MCF 10A (cell line): ENCODE measurements at regions of chr5 and their contacts with region 1.

Region 1: DNA sequence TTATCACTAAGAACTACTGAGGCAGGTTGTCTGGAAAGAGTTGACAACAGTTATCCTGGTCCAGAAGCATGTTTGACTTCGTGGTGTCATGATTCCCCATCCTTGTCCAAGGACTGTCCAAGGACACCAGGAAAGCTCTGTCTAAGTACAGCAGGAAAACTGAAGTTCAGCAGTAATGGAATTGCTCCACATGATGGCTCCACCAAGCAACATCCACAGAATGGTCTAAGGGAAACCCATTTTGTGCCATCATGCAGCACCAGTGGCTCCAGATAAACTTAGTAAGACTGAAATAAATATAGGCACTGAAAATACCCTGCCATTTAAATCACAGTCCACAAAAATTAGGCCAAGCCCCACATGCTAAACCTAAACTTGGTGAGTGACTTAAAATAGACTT is 192.8 kb downstream of the CDH18 start:
- DNase-seq: peak; percentile 32
- H3K4me3 Mint-ChIP-seq: no peak overlapping the region
- H3K27ac Mint-ChIP-seq: no peak overlapping the region
- H3K4me1 Mint-ChIP-seq: no peaks in the 10 kb centered on the region
- H3K27me3 Mint-ChIP-seq: no peaks in the 10 kb centered on the region
- CTCF ChIP-seq: peak; percentile 39

Region 2: DNA sequence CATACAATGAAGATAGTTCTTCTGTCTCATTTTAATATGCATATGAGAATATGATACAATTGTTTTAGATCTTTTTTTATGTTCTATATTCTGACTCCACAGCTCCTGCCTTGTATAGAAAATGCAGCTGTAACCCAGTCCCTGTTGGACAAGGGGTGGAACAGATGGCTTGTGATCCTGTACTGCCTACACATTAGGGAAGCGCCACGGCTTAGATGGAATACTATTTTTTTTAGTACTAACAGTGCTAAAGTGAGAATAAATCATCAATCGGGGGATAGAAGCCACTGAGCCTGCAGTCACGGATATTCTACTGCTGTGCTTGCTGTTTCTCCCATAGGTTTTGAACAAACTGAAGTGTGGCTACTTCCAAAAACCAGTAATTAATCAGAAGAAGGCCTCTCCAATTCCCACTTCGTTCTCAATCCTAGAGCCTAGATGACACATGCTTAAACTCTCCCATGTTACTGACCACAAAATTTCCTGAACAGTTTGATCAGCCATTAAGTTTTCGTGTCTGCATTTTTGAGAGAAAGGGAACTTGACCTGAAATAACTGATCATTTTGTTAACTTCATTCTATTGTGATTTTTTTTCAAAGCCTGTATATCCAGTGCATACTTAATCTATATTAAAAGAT is 42.4 kb after region 1 on chr5:
- CTCF ChIA-PET with region 1: no interaction called
- POLR2A ChIA-PET with region 1: no interaction called
- intact Hi-C with region 1: no loop called
- DNase-seq: no peak
- H3K4me3 Mint-ChIP-seq: no peak overlapping the region
- H3K27ac Mint-ChIP-seq: no peak overlapping the region
- H3K4me1 Mint-ChIP-seq: no peaks in the 10 kb centered on the region
- H3K27me3 Mint-ChIP-seq: no peaks in the 10 kb centered on the region
- CTCF ChIP-seq: no peak

Region 3: DNA sequence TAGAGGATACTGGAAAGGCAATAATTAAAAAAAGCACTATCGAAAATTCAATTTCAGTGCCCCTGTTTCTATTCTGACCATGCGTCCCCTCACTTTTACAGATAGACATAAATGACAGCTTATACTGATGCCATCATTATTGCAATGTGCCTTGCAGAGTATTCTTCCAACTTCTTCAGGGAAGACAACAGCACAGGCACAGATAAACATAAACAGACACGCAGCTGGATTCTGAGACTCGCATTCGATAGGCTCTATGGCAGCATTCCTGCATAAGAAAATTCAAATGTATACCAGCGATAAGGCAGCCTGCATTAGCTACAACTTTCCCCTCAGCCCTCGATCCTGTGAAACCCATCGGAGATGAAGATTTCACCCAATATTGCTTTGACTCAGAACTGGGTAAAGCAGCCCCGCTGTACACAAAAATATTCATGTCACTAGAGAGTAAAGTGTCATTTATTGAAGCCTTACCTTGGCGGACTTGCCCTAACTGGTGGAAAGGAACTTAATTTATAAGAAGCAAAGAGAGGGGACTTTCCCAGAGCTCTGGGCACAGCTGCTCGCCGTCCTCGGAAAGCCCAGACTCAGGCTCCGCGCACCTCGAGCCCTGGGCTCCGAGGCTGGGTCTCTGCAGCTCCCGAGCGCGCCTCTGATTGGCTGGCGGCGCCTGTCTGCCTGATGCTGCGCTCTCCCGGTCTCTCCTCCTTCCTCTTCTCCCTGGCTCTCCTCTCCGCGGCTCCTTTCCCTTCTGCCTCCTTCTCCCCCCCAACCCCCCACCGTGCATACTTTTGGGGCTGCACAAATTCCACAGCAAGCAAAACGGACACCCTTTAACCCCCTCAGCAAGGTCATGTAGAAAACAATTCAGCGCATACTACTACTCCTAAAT is 192.6 kb after region 1 on chr5 and contains the start of gene CDH18:
- CTCF ChIA-PET with region 1: no interaction called
- POLR2A ChIA-PET with region 1: no interaction called
- intact Hi-C with region 1: loop called (anchors 10 kb)
- DNase-seq: peak; percentile 62
- H3K4me3 Mint-ChIP-seq: peak within 1 kb of the TSS; percentile 73
- H3K27ac Mint-ChIP-seq: no peak within 1 kb of the TSS
- H3K4me1 Mint-ChIP-seq: peaks cover 10% of the 10 kb centered on the region
- H3K27me3 Mint-ChIP-seq: no peaks in the 10 kb centered on the region
- CTCF ChIP-seq: no peak
- total RNA-seq, gene CDH18: not detected in 2 replicates

Region 4: DNA sequence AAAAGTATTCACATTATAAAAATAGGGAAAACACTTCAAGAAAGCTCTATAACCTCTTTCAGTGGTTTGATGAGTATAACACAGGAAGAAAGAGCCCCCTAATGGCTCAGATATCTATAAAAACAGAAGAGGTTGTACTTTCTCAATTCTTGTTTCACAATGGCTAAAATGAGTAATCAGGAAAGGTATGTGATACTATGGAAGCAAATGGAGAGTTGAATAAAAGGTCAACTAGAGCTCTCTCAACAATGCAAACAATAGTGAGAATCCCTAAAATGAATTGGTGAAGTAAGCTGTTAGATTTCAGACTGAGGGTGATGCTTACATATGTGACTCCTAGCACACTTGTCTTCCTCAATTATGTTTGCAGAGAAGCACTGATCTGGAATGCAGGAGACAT is 777.4 kb after region 1 on chr5:
- CTCF ChIA-PET with region 1: no interaction called
- POLR2A ChIA-PET with region 1: no interaction called
- intact Hi-C with region 1: loop called (anchors 1 kb)
- DNase-seq: peak; percentile 88
- H3K4me3 Mint-ChIP-seq: no peak overlapping the region
- H3K27ac Mint-ChIP-seq: no peak overlapping the region
- H3K4me1 Mint-ChIP-seq: peaks cover 15% of the 10 kb centered on the region
- H3K27me3 Mint-ChIP-seq: no peaks in the 10 kb centered on the region
- CTCF ChIP-seq: peak; percentile 39